Activated CD4-positive, alpha-beta T cell treated with anti-CD3 and anti-CD28 coated beads for 36 hours (primary cell): ENCODE measurements at regions of chr6 and their contacts with region 1.

Region 1: GRCh38 chr6:6008648-6009421 is 2.1 kb upstream of the NRN1 start:
- DNase-seq: peak; percentile 91
- ATAC-seq: peak; percentile 74
- H3K4me3 Mint-ChIP-seq: peak overlapping the region; percentile 73
- H3K27ac Mint-ChIP-seq: peak overlapping the region; percentile 86
- H3K4me1 Mint-ChIP-seq: peaks cover 40% of the 10 kb centered on the region
- H3K27me3 Mint-ChIP-seq: peaks cover 58% of the 10 kb centered on the region

Region 2: GRCh38 chr6:5003604-5004372 is 1005.0 kb before region 1 on chr6 and contains the start of gene RPP40:
- CTCF ChIA-PET with region 1: no interaction called
- POLR2A ChIA-PET with region 1: no interaction called
- intact Hi-C with region 1: loop called in 1 of 2 experiments (anchors 5 kb)
- DNase-seq: peak; percentile 99
- ATAC-seq: peak; percentile 97
- H3K4me3 Mint-ChIP-seq: peak within 1 kb of the TSS; percentile 87
- H3K27ac Mint-ChIP-seq: peak within 1 kb of the TSS; percentile 94
- H3K4me1 Mint-ChIP-seq: peaks cover 8% of the 10 kb centered on the region
- H3K27me3 Mint-ChIP-seq: no peaks in the 10 kb centered on the region
- total RNA-seq, gene RPP40: 7.7 to 11.2 TPM

Region 3: DNA sequence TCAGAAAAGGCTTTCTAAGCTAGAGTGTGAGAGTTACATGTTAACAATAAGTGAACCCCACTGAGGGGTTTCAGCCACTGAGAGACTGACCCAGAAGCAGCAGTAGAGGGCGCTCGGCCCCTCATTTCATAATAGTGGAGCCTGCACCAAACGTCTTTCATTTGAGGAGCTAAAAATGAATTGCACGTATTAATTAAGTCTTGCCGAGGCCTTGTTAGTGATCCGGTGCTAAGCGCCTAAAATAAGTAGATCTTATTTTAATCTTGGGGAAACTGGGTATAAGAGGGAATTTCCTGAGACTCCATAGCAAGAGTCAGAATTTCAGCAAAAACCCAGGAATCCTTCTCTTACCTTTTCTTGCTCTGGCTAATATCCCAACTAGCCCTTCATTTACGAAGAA is 537.8 kb before region 1 on chr6:
- CTCF ChIA-PET with region 1: no interaction called
- POLR2A ChIA-PET with region 1: no interaction called
- intact Hi-C with region 1: loop called in 1 of 2 experiments (anchors 5 kb)
- DNase-seq: peak; percentile 79
- ATAC-seq: peak; percentile 89
- H3K4me3 Mint-ChIP-seq: no peak overlapping the region
- H3K27ac Mint-ChIP-seq: no peak overlapping the region
- H3K4me1 Mint-ChIP-seq: peaks cover 4% of the 10 kb centered on the region
- H3K27me3 Mint-ChIP-seq: no peaks in the 10 kb centered on the region

Region 4: DNA sequence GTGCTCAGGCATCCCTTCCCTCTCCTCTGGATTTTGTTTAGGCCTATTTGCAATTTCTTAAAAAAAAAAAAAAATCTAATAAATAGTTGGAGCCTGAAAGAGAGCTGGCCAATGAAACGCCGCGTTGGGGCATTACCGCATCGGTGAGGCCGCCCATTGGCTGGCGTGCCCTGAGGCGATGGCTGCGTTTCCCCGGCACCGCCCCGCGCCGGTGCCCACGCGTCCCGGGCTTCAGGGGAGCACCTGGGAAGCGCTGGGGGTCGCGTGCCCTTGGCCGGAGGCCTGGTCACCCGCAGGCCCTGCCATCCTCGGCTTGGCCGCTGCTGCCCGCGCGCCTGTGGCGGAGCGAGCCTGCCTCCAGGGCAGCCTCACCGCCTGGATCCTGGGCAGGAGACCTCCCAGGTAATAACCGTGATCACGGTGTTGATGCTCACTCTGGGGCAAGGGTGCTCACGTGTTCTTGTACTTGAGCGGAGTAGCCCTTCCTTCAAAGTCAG is 157.5 kb before region 1 on chr6:
- CTCF ChIA-PET with region 1: no interaction called
- POLR2A ChIA-PET with region 1: no interaction called
- intact Hi-C with region 1: loop called in 1 of 2 experiments (anchors 5 kb)
- DNase-seq: peak; percentile 84
- ATAC-seq: peak; percentile 99
- H3K4me3 Mint-ChIP-seq: peak overlapping the region; percentile 65
- H3K27ac Mint-ChIP-seq: peak overlapping the region; percentile 55
- H3K4me1 Mint-ChIP-seq: peaks cover 7% of the 10 kb centered on the region
- H3K27me3 Mint-ChIP-seq: peaks cover 5% of the 10 kb centered on the region

Region 5: GRCh38 chr6:5892669-5893068 is 116.2 kb before region 1 on chr6:
- CTCF ChIA-PET with region 1: no interaction called
- POLR2A ChIA-PET with region 1: no interaction called
- intact Hi-C with region 1: loop called in 1 of 2 experiments (anchors 1 kb)
- DNase-seq: no peak
- ATAC-seq: no peak
- H3K4me3 Mint-ChIP-seq: peak overlapping the region; percentile 79
- H3K27ac Mint-ChIP-seq: peak overlapping the region; percentile 83
- H3K4me1 Mint-ChIP-seq: peaks cover 7% of the 10 kb centered on the region
- H3K27me3 Mint-ChIP-seq: no peaks in the 10 kb centered on the region

Region 6: DNA sequence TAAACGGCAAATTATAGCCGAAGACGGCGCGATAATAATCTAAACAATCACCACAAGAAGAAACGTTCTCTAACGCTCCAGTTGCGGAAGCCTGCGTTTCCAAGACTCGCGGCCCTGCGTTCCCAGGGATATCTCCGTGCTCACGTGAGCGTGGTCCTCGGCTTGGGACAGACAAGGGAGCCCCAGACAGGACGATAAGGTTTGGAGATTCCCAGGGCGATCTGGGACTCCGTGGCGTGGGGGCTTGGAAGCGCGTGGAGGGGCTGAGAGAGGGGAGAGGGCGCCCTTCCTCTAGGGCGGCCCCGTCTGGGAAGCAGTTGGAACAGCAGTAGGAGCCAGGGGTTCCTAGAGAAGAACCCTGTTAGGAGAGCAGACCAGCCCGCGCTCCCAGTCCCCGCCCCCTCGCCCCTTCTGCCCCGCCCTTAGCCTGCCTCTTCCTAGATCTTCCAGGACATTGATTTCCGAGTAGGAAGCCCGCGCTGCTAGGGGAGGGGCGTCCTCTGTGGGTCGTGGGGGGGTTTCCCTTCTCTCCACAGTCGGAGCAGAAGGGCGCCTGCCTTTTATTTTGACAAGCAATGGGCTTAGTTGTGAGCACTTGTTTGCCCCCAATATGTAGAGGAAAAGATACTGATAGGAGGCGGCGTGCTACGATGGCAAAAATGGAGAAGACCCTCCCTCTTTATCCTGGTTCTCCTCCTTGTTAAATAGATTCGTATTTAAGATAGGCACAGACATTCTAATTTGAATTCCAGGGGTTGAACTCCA is 12.7 kb before region 1 on chr6:
- CTCF ChIA-PET with region 1: interaction called, 10 read pairs
- POLR2A ChIA-PET with region 1: no interaction called
- intact Hi-C with region 1: loop called (anchors 1 kb)
- DNase-seq: peak; percentile 44
- ATAC-seq: peak; percentile 18
- H3K4me3 Mint-ChIP-seq: peak overlapping the region; percentile 71
- H3K27ac Mint-ChIP-seq: peak overlapping the region; percentile 37
- H3K4me1 Mint-ChIP-seq: peaks cover 47% of the 10 kb centered on the region
- H3K27me3 Mint-ChIP-seq: peaks cover 70% of the 10 kb centered on the region

Region 7: GRCh38 chr6:6547110-6547879 is 538.5 kb after region 1 on chr6:
- CTCF ChIA-PET with region 1: no interaction called
- POLR2A ChIA-PET with region 1: no interaction called
- intact Hi-C with region 1: loop called in 1 of 2 experiments (anchors 5 kb)
- DNase-seq: peak; percentile 90
- ATAC-seq: peak; percentile 95
- H3K4me3 Mint-ChIP-seq: peak overlapping the region; percentile 51
- H3K27ac Mint-ChIP-seq: no peak overlapping the region
- H3K4me1 Mint-ChIP-seq: peaks cover 2% of the 10 kb centered on the region
- H3K27me3 Mint-ChIP-seq: peaks cover 29% of the 10 kb centered on the region